Ascending aorta (tissue), 2 donors: ENCODE measurements at regions of chr10 and their contacts with region 1.

Region 1: DNA sequence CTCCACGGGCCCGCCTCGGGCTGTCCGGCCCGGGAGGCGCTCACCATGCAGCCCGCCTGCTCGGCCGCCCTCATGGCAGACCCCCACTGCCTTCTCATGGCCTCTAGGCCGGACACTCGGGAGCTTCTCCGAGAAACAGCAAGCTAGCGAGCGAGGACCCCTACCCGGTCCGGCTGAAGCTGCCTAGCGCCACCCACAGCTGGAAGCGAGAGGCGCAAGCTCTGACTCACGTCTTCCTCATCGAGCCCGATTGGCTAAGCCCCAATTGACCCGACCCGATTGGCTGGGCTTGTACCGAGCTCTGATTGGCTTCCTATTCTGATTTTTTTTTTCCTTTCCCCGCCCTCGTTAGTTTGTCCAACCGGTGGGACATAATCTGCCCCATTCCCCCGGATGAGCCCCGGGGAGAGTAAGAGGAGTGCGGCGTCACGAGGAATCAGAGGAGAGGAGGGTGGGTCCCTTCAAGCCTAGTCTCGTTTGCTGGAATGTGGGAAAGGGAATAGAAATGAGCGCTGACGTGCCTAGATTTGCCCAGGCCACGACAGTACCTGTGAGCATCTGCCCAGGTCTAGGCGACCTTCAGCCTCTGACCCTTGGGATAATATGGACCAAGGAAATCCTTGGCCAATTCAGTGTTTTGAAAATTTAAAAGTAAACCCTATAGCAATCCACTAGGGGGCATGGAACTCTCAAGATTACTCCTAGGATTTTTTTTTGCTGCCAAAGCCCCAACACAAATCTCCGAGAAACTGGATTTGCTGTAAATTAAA is at the start of gene TYSND1:
- DNase-seq: peak; percentile 87 to 98
- H3K4me3 ChIP-seq: peak within 1 kb of the TSS; percentile 87 to 95
- H3K27ac ChIP-seq: peak within 1 kb of the TSS; percentile 87 to 88
- H3K4me1 ChIP-seq: peaks cover 0 to 16% of the 10 kb centered on the region in 2 donors
- H3K27me3 ChIP-seq: no peaks in the 10 kb centered on the region
- CTCF ChIP-seq: peak; percentile 67 to 88 (median 79)
- total RNA-seq, gene TYSND1: 12.3 TPM

Region 2: DNA sequence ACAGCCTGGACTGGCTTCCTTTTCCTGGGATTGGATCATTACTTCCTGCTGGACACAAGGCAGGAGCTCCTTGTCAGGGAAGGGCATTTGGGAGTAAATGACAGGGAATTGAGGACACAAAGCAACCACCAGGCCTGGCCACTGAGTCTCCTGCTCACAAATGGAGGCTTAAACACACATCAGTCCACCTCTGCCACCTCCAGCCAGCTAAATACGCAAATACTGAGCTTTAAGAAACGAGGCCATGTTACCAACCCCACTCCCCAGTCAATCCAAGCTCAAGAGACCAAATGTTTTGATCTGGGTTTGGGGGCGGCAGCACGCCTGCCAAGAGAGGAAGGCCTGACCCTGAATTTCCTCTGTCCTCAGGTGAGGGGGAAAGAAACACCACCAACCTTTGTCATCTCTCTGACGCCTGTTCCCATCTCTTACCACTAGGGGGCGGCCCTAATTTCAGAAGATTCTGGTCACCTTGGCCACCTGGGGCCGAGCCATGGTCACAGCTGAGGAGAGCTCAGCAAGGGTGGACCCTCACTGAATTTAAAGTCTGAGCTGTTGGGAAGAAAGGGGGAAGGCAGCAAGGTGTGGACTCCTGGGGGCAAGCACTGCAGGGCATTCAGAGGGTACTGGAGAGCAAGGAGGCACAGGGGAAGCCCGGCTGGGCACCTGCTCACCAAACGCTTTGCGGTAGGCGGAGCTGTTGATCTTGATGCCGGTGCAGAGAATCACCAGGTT is 30.6 kb before region 1 on chr10:
- intact Hi-C with region 1: loop called (anchors 1 kb)
- DNase-seq: no peak
- H3K4me3 ChIP-seq: no peak overlapping the region
- H3K27ac ChIP-seq: no peak overlapping the region
- H3K4me1 ChIP-seq: no peaks in the 10 kb centered on the region
- H3K27me3 ChIP-seq: no peaks in the 10 kb centered on the region
- CTCF ChIP-seq: peak; percentile 73 to 85 (median 81)

Region 3: GRCh38 chr10:70132098-70133029 is 14.3 kb before region 1 on chr10 and contains the start of gene AIFM2:
- intact Hi-C with region 1: loop called (anchors 1 kb)
- DNase-seq: peak in 1 of 2 donors; percentile 88
- H3K4me3 ChIP-seq: peak within 1 kb of the TSS; percentile 73 to 96
- H3K27ac ChIP-seq: peak within 1 kb of the TSS; percentile 86 to 89
- H3K4me1 ChIP-seq: peaks cover 0 to 13% of the 10 kb centered on the region in 2 donors
- H3K27me3 ChIP-seq: no peaks in the 10 kb centered on the region
- CTCF ChIP-seq: peak in 1 of 3 experiments; percentile 10
- total RNA-seq, gene AIFM2: 2.9 TPM

Region 4: DNA sequence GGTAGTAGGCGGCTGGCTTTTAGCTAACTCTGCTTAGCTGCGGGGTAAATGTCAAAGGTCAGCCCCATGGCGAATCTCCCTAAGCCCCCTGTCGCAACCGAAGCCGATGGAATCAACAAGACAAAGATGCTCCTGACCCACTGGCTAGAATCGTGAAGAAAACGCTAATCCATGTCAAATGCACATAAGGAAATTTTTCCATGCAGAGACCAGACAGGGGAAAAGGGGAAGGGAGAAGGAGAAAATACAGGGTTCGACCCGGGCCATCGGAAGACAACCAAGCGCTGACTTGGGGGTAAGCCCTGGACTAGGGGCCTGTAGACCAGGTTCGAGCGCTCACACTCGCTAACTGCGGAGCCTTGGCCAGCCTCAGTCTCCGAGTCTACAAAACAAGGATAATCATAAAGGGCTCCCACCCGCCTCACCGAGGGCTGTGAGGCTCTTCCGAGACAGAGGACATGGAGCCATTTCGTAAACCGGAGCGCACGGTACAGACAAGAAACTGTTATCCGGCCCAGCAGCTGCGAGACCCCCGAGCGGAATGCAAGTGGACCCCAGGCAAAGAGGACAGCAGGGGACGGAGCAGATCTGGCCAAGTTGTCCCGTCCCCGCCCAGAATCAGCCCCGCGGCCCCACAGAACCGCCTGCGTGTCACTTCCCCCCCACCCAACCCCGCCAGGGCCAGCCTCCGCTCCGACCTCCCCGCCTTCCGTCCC is 23.1 kb after region 1 on chr10:
- intact Hi-C with region 1: loop called (anchors 1 kb)
- DNase-seq: no peak
- H3K4me3 ChIP-seq: peak overlapping the region; percentile 61 to 74
- H3K27ac ChIP-seq: peak overlapping the region; percentile 87 to 88
- H3K4me1 ChIP-seq: peaks cover 3 to 15% of the 10 kb centered on the region in 2 donors
- H3K27me3 ChIP-seq: no peaks in the 10 kb centered on the region
- CTCF ChIP-seq: no peak

Region 5: GRCh38 chr10:70648427-70648826 is 501.8 kb after region 1 on chr10:
- intact Hi-C with region 1: no loop called
- DNase-seq: no peak
- H3K4me3 ChIP-seq: no peak overlapping the region
- H3K27ac ChIP-seq: no peak overlapping the region
- H3K4me1 ChIP-seq: no peaks in the 10 kb centered on the region
- H3K27me3 ChIP-seq: no peaks in the 10 kb centered on the region
- CTCF ChIP-seq: no peak